ENCODE measurements at regions of chr11 and their contacts with region 1.

Region 1: DNA sequence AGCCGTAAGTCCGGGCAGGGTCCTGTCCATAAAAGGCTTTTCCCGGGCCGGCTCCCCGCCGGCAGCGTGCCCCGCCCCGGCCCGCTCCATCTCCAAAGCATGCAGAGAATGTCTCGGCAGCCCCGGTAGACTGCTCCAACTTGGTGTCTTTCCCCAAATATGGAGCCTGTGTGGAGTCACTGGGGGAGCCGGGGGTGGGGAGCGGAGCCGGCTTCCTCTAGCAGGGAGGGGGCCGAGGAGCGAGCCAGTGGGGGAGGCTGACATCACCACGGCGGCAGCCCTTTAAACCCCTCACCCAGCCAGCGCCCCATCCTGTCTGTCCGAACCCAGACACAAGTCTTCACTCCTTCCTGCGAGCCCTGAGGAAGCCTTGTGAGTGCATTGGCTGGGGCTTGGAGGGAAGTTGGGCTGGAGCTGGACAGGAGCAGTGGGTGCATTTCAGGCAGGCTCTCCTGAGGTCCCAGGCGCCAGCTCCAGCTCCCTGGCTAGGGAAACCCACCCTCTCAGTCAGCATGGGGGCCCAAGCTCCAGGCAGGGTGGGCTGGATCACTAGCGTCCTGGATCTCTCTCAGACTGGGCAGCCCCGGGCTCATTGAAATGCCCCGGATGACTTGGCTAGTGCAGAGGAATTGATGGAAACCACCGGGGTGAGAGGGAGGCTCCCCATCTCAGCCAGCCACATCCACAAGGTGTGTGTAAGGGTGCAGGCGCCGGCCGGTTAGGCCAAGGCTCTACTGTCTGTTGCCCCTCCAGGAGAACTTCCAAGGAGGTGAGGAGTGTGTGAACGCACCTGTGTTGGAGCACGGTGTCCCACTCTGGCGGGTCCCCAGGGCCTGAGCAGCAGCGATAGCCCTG is at the start of gene TAGLN:
- DNase-seq: peak; percentile 77 to 96
- H3K4me3 ChIP-seq: peak within 1 kb of the TSS; percentile 46 to 75 (median 57)
- H3K27ac ChIP-seq: peak within 1 kb of the TSS; percentile 94 to 98
- H3K4me1 ChIP-seq: peaks cover 0 to 11% of the 10 kb centered on the region in 2 donors
- H3K27me3 ChIP-seq: no peaks in the 10 kb centered on the region
- CTCF ChIP-seq: no peak
- POLR2A ChIP-seq: peak; percentile 39
- total RNA-seq, gene TAGLN: 602 to 1,663 (median 1,380) TPM

Region 2: GRCh38 chr11:116960930-116961329 is 238.4 kb before region 1 on chr11:
- intact Hi-C with region 1: no loop called
- DNase-seq: peak in 1 of 2 donors; percentile 72
- H3K4me3 ChIP-seq: no peak overlapping the region
- H3K27ac ChIP-seq: peak overlapping the region; percentile 11 to 46
- H3K4me1 ChIP-seq: peaks cover 3 to 9% of the 10 kb centered on the region in 2 donors
- H3K27me3 ChIP-seq: no peaks in the 10 kb centered on the region
- CTCF ChIP-seq: no peak
- POLR2A ChIP-seq: no peak

Region 3: DNA sequence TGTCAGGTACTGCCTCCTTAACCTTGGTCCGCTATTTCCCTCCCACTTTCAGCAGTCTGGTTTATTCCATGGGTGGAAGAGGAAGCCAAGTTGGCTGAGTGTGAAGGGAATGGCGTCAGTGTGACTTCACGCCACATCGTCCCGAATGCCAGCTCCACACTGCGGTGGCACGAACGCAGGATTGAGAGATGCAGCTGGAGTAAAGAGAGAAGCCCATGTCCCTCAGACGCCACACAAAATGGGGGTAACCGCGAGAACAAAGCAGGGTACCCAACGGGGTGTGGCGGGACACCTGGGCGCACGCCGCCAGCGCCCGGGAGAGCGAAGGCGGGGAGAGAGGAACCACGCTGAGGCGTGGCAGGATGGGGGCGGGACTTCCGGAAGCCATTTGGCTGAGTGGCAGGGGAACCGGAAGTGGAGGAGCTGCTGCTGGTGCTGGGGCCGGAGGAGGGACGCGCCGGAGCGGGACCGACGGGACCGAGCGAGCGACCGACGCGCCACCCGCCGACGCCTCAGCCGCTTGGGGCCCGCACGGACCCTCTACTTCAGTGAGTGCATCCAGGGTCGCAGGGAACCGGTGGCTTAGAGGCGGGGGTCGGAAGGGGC is 55.3 kb before region 1 on chr11 and contains the start of gene PAFAH1B2:
- intact Hi-C with region 1: loop called (anchors 10 kb)
- DNase-seq: peak; percentile 93 to 96
- H3K4me3 ChIP-seq: peak within 1 kb of the TSS; percentile 85 to 97 (median 90)
- H3K27ac ChIP-seq: peak within 1 kb of the TSS; percentile 91 to 92
- H3K4me1 ChIP-seq: no peaks in the 10 kb centered on the region
- H3K27me3 ChIP-seq: no peaks in the 10 kb centered on the region
- CTCF ChIP-seq: no peak
- POLR2A ChIP-seq: peak; percentile 74
- total RNA-seq, gene PAFAH1B2: 76.8 to 92.2 (median 86.2) TPM